ENCODE measurements at regions of chr7 and their contacts with region 1.

Region 1: GRCh38 chr7:39732837-39733804 is 109.7 kb downstream of the RALA start:
- DNase-seq: peak; percentile 98
- ATAC-seq: peak; percentile 91
- H3K4me3 ChIP-seq: peak overlapping the region; percentile 50
- H3K27ac ChIP-seq: peak overlapping the region; percentile 83
- H3K4me1 ChIP-seq: peaks cover 11% of the 10 kb centered on the region
- H3K27me3 ChIP-seq: no peaks in the 10 kb centered on the region
- CTCF ChIP-seq: no peak
- POLR2A ChIP-seq: peak; percentile 85
- RAD21 ChIP-seq: peak; percentile 2; the same call in 1 of the 2 replicates

Region 2: GRCh38 chr7:38781991-38782390 is 951.1 kb before region 1 on chr7:
- CTCF ChIA-PET with region 1: no interaction called
- POLR2A ChIA-PET with region 1: no interaction called
- dilution Hi-C with region 1: no loop called
- in situ Hi-C with region 1: no loop called
- intact Hi-C with region 1: no loop called
- DNase-seq: no peak
- ATAC-seq: no peak
- H3K4me3 ChIP-seq: no peak overlapping the region
- H3K27ac ChIP-seq: no peak overlapping the region
- H3K4me1 ChIP-seq: no peaks in the 10 kb centered on the region
- H3K27me3 ChIP-seq: no peaks in the 10 kb centered on the region
- CTCF ChIP-seq: no peak
- POLR2A ChIP-seq: no peak
- RAD21 ChIP-seq: no peak

Region 3: GRCh38 chr7:38840736-38841460 is 892.2 kb before region 1 on chr7:
- CTCF ChIA-PET with region 1: no interaction called
- POLR2A ChIA-PET with region 1: no interaction called
- dilution Hi-C with region 1: no loop called
- in situ Hi-C with region 1: loop called (anchors 25 kb)
- intact Hi-C with region 1: no loop called
- DNase-seq: peak; percentile 93
- ATAC-seq: peak; percentile 92
- H3K4me3 ChIP-seq: no peak overlapping the region
- H3K27ac ChIP-seq: peak overlapping the region; percentile 92
- H3K4me1 ChIP-seq: peaks cover 9% of the 10 kb centered on the region
- H3K27me3 ChIP-seq: no peaks in the 10 kb centered on the region
- CTCF ChIP-seq: no peak
- POLR2A ChIP-seq: no peak
- RAD21 ChIP-seq: no peak

Region 4: DNA sequence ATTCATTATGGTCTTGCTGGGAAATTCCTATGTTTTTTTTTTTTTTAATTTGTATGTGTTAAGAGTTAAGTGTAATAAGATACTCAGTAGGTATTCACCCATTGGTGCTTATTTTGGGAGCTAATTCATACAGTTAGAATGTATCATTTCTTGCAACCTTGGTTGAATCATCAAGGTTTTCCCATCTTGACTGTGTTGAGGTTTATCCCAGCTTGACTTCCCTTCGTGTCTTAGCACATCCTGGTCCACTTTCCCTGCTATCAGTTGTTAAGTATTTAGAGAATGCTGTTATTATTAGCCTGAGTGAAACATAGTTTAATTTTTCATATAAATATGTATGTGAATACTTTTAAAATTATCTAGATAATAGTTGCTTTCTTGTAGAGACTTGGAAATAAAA is 89.0 kb before region 1 on chr7:
- CTCF ChIA-PET with region 1: no interaction called
- POLR2A ChIA-PET with region 1: no interaction called
- dilution Hi-C with region 1: no loop called
- in situ Hi-C with region 1: no loop called
- intact Hi-C with region 1: loop called (anchors 5 kb)
- DNase-seq: peak; percentile 83
- ATAC-seq: peak; percentile 78
- H3K4me3 ChIP-seq: no peak overlapping the region
- H3K27ac ChIP-seq: no peak overlapping the region
- H3K4me1 ChIP-seq: peaks cover 7% of the 10 kb centered on the region
- H3K27me3 ChIP-seq: no peaks in the 10 kb centered on the region
- CTCF ChIP-seq: no peak
- POLR2A ChIP-seq: no peak
- RAD21 ChIP-seq: no peak

Region 5: GRCh38 chr7:39702133-39702532 is 31.0 kb before region 1 on chr7:
- CTCF ChIA-PET with region 1: no interaction called
- POLR2A ChIA-PET with region 1: no interaction called
- dilution Hi-C with region 1: no loop called
- in situ Hi-C with region 1: no loop called
- intact Hi-C with region 1: loop called (anchors 1 kb)
- DNase-seq: peak; percentile 86
- ATAC-seq: peak; percentile 90
- H3K4me3 ChIP-seq: no peak overlapping the region
- H3K27ac ChIP-seq: no peak overlapping the region; the same call in 1 of the 2 replicates
- H3K4me1 ChIP-seq: peaks cover 8% of the 10 kb centered on the region
- H3K27me3 ChIP-seq: no peaks in the 10 kb centered on the region
- CTCF ChIP-seq: no peak
- POLR2A ChIP-seq: no peak
- RAD21 ChIP-seq: no peak

Region 6: DNA sequence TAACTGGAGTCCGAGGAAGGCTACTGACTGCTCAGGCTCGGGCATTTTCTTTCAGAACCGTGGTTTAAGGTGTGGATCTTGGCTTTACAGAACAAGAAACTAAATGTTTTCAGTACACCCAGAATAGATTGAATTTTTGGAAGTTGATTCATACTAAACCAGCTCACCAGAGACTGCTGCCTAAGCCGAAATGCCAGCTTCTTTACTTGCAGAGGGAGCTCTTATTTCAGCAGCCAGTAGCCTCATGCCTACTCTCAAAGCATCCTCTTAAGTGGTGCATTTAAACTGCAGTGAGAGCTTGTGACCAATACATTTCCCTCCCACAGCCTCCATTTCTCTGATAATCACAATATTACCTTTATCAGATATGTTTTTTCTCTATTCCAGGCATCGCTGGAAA is 1016.8 kb after region 1 on chr7:
- CTCF ChIA-PET with region 1: no interaction called
- POLR2A ChIA-PET with region 1: no interaction called
- dilution Hi-C with region 1: no loop called
- in situ Hi-C with region 1: no loop called
- intact Hi-C with region 1: no loop called
- DNase-seq: peak; percentile 48
- ATAC-seq: peak; percentile 70
- H3K4me3 ChIP-seq: no peak overlapping the region
- H3K27ac ChIP-seq: no peak overlapping the region
- H3K4me1 ChIP-seq: peaks cover 2% of the 10 kb centered on the region
- H3K27me3 ChIP-seq: no peaks in the 10 kb centered on the region
- CTCF ChIP-seq: no peak
- POLR2A ChIP-seq: no peak
- RAD21 ChIP-seq: no peak